ENCODE measurements at regions of chr19 and their contacts with region 1.

Region 1: GRCh38 chr19:43743022-43743421 is 11.7 kb downstream of the SMG9 start:
- DNase-seq: no peak
- H3K4me3 Mint-ChIP-seq: no peak overlapping the region
- H3K27ac Mint-ChIP-seq: no peak overlapping the region
- H3K4me1 Mint-ChIP-seq: peaks cover 15% of the 10 kb centered on the region
- H3K27me3 Mint-ChIP-seq: no peaks in the 10 kb centered on the region

Region 2: DNA sequence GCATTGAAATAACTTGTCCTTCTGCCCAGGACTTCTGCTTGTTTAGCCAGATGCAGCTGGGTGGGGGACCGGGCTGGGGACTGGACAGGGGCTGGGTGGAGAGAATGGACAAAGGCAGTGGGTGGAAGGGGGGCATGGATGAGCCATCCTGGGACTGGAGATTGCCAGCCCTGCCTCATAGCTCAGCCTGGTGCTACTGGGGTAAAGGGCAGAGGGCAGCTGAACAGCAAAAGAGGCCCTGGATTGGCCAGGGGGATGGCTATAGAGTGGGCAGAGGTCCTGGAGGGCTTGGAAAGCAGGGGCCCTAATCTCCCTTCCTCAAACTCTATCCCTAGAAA is 55.4 kb before region 1 on chr19:
- intact Hi-C with region 1: no loop called
- DNase-seq: no peak
- H3K4me3 Mint-ChIP-seq: no peak overlapping the region
- H3K27ac Mint-ChIP-seq: no peak overlapping the region
- H3K4me1 Mint-ChIP-seq: no peaks in the 10 kb centered on the region
- H3K27me3 Mint-ChIP-seq: no peaks in the 10 kb centered on the region

Region 3: GRCh38 chr19:43784981-43785808 is 42.2 kb after region 1 on chr19:
- intact Hi-C with region 1: loop called (anchors 1 kb)
- DNase-seq: peak; percentile 89
- H3K4me3 Mint-ChIP-seq: peak overlapping the region; percentile 75
- H3K27ac Mint-ChIP-seq: peak overlapping the region; percentile 92
- H3K4me1 Mint-ChIP-seq: peaks cover 39% of the 10 kb centered on the region
- H3K27me3 Mint-ChIP-seq: peaks cover 4% of the 10 kb centered on the region

Region 4: DNA sequence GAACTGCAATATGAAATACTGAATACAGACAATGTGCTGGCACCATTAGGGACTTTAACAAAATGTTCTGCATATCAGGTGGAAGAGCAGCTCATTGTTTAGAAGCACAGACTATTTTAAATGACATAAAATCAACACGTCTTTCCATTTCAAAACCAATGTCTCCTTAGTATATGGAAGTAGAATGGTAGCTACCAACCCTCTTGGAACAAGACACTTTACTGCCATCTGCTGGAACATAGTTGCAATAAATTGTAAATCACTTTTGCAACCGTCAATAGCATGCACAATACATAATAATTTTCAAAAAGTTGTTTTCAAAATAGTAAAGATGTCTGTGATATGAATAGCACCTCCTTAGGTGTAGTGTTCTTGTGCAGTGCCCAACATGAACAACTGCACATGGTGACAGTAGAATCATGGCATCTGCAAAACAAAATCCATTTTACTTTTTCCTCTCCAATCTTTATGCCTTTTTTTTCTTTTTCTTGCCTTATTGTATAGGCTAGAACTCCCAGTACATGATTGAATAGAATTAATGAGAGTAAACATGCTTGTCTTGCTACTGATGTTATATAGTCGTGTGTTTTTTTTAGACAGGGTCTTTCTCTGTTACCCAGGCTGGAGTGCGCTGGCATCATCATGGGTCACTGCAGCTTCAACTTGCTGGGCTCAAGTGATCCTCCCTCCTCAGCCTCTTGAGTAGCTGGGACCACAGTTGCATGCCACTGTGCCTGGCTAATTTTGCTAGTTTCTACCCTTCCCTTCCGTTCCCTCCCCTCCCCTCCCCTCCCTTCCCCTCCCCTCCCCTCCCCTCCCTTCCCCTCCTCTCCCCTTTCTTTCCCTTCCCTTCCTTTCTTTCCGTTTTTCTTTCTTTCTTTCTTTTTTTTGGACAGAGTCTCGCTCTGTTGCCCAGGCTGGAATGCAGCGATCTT is 67.0 kb after region 1 on chr19:
- intact Hi-C with region 1: loop called (anchors 1 kb)
- DNase-seq: peak; percentile 72
- H3K4me3 Mint-ChIP-seq: no peak overlapping the region
- H3K27ac Mint-ChIP-seq: no peak overlapping the region
- H3K4me1 Mint-ChIP-seq: no peaks in the 10 kb centered on the region
- H3K27me3 Mint-ChIP-seq: peaks cover 16% of the 10 kb centered on the region